K562 (cell line): ENCODE measurements at regions of chr17 and their contacts with region 1.

Region 1: GRCh38 chr17:47929218-47930000 is 12.0 kb upstream of the PNPO start:
- DNase-seq: no peak
- ATAC-seq: no peak
- H3K4me3 ChIP-seq: no peak overlapping the region
- H3K27ac ChIP-seq: no peak overlapping the region
- H3K4me1 ChIP-seq: peaks cover 24 to 45% of the 10 kb centered on the region in 2 experiments
- H3K27me3 ChIP-seq: no peaks in the 10 kb centered on the region
- CTCF ChIP-seq: no peak
- EP300 ChIP-seq: no peak
- POLR2A ChIP-seq: no peak
- RAD21 ChIP-seq: no peak

Region 2: GRCh38 chr17:47941236-47941994 is 12.0 kb after region 1 on chr17 and contains the start of gene PNPO:
- CTCF ChIA-PET with region 1: no interaction called
- POLR2A ChIA-PET with region 1: interaction called, 18 read pairs
- in situ Hi-C with region 1: no loop called
- intact Hi-C with region 1: no loop called
- DNase-seq: peak; percentile 95 to 99 (median 96)
- ATAC-seq: peak; percentile 98
- H3K4me3 ChIP-seq: peak within 1 kb of the TSS; percentile 62
- H3K27ac ChIP-seq: peak within 1 kb of the TSS; percentile 84
- H3K4me1 ChIP-seq: peaks cover 29 to 31% of the 10 kb centered on the region in 2 experiments; a peak in 4 of 5 replicates
- H3K27me3 ChIP-seq: no peaks in the 10 kb centered on the region
- CTCF ChIP-seq: no peak
- EP300 ChIP-seq: no peak
- POLR2A ChIP-seq: peak; percentile 83
- RAD21 ChIP-seq: no peak
- polyA plus RNA-seq, gene PNPO: 16.6 to 23.1 TPM

Region 3: DNA sequence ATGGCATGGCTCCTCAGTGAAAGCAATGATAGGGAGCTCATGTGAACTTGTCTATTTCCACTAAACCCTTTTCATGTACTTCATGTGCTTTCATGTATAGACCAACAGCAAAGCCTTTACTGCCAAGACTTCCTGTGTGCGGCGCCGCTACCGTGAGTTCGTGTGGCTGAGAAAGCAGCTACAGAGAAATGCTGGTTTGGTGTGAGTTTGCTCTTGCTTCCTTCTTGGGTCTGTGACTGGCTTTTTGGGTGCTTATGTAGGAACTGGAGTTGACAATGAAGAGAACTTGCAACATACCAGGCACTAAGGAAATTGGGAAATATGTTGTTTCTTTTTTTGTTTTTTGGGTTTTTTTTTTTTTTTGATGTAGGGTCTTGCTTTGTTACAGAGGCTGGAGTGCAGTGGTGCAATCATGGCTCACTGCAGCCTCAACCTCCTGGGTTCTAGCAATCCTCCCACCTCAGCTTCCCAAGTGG is 183.8 kb after region 1 on chr17:
- CTCF ChIA-PET with region 1: no interaction called
- POLR2A ChIA-PET with region 1: no interaction called
- in situ Hi-C with region 1: no loop called
- intact Hi-C with region 1: no loop called
- DNase-seq: no peak
- ATAC-seq: no peak
- H3K4me3 ChIP-seq: no peak overlapping the region
- H3K27ac ChIP-seq: no peak overlapping the region
- H3K4me1 ChIP-seq: peaks cover 0 to 9% of the 10 kb centered on the region in 2 experiments; a peak in 3 of 5 replicates
- H3K27me3 ChIP-seq: no peaks in the 10 kb centered on the region
- CTCF ChIP-seq: no peak
- EP300 ChIP-seq: no peak
- POLR2A ChIP-seq: no peak
- RAD21 ChIP-seq: no peak